Gastrocnemius medialis (tissue), 4 donors: ENCODE measurements at regions of chr4 and their contacts with region 1.

Region 1: GRCh38 chr4:141346144-141346543 is 125.4 kb downstream of the ZNF330 start:
- DNase-seq: no peak
- ATAC-seq: peak in 1 of 2 donors; percentile 71
- H3K4me3 ChIP-seq: no peak overlapping the region
- H3K27ac ChIP-seq: no peak overlapping the region
- H3K4me1 ChIP-seq: peaks cover 0 to 6% of the 10 kb centered on the region in 2 donors
- H3K27me3 ChIP-seq: no peaks in the 10 kb centered on the region
- CTCF ChIP-seq: peak; percentile 11 to 56 (median 27)
- POLR2A ChIP-seq: no peak

Region 2: GRCh38 chr4:141702472-141703182 is 356.5 kb after region 1 on chr4:
- in situ Hi-C with region 1: no loop called
- intact Hi-C with region 1: loop called (anchors 10 kb)
- DNase-seq: peak in 1 of 2 donors; percentile 20
- ATAC-seq: no peak
- H3K4me3 ChIP-seq: no peak overlapping the region
- H3K27ac ChIP-seq: no peak overlapping the region
- H3K4me1 ChIP-seq: no peaks in the 10 kb centered on the region
- H3K27me3 ChIP-seq: no peaks in the 10 kb centered on the region
- CTCF ChIP-seq: no peak
- POLR2A ChIP-seq: no peak